PC-3 (cell line): ENCODE measurements at regions of chr5 and their contacts with region 1.

Region 1: GRCh38 chr5:17216176-17216973 is 1.1 kb upstream of the BASP1 start:
- DNase-seq: peak; percentile 99
- ATAC-seq: peak; percentile 51
- H3K4me3 ChIP-seq: peak overlapping the region; percentile 67
- H3K27ac ChIP-seq: no peak overlapping the region
- H3K4me1 ChIP-seq: peaks cover 29% of the 10 kb centered on the region
- H3K27me3 ChIP-seq: no peaks in the 10 kb centered on the region
- CTCF ChIP-seq: peak; percentile 99

Region 2: DNA sequence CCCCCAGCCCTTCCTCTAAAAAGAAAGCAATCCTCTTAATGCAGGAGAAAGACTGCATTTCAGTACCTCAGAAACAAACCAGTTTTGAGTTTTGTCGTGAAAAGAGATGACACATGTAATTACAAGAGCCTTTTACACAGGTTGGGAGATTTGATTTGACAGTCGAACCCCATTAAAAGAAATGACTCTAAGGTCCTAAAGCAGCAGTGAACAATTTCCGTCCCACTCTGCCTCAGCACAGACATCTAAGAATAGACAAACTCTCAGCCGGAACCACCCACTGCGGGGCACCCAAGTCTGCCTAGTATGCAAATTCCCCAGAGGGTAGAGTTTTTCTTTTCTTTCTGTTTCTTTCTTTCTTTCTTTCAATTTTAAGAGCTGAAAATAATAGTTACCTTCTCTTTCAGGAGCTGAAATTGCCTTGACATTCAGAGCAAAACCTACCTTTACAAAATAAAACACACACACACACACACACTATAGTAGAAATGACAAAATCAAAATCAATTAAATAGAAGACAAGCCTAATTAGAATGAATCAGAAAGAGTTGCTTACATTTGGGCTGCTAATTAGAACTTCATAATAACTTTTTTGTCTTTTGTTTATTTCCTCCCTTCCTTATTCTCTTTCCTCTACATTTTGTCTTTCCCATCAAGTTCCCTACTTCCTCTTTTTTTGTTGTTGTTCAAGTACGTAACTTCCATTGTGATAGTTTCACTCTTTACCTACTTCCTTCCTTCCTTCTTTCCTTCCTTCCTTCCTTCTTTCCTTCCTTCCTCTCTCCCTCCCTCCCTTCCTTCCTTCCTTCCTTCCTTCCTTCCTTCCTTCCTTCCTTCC is 66.1 kb after region 1 on chr5:
- CTCF ChIA-PET with region 1: no interaction called
- POLR2A ChIA-PET with region 1: no interaction called
- intact Hi-C with region 1: no loop called
- DNase-seq: no peak
- ATAC-seq: no peak
- H3K4me3 ChIP-seq: no peak overlapping the region
- H3K27ac ChIP-seq: no peak overlapping the region
- H3K4me1 ChIP-seq: no peaks in the 10 kb centered on the region
- H3K27me3 ChIP-seq: no peaks in the 10 kb centered on the region
- CTCF ChIP-seq: no peak

Region 3: DNA sequence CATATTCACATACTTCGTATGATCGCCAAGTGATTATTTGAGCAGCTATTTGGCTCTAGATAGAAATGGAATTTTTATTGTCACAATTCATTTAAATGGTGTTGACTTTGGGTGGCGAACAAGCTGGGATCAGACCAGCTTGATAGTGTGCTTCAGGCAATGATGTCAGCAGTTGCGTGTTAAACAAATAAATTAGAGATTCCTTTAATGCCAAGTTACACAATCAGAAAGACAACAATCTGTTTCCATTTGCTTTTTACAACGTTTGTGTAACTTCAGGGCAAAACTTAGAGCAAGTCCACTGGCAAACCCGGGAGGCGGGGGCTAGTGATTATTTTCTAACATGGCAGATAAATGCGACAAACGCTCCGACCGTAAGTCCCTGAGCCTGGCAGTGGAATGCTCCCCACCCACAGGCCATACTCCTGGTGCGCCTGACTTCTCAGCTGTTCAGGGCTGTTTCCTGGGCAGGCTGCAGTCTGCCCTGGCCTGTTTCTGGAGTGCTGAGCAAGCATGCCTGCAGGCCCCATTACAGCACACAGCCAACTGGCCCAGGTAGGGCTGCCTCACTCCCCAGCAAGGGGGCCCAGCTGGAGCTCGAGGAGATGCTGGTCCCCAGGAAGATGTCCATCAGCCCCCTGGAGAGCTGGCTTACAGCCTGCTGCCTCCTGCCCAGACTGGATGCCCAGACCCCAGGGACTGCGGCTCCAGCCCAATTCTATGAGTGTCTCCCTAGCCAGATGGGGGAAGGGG is 89.8 kb after region 1 on chr5:
- CTCF ChIA-PET with region 1: no interaction called
- POLR2A ChIA-PET with region 1: no interaction called
- intact Hi-C with region 1: loop called (anchors 2 kb)
- DNase-seq: peak; percentile 93
- ATAC-seq: peak; percentile 88
- H3K4me3 ChIP-seq: peak overlapping the region; percentile 43
- H3K27ac ChIP-seq: peak overlapping the region; percentile 89
- H3K4me1 ChIP-seq: peaks cover 35% of the 10 kb centered on the region
- H3K27me3 ChIP-seq: no peaks in the 10 kb centered on the region
- CTCF ChIP-seq: no peak

Region 4: GRCh38 chr5:17896605-17897004 is 680.2 kb after region 1 on chr5:
- CTCF ChIA-PET with region 1: no interaction called
- POLR2A ChIA-PET with region 1: no interaction called
- intact Hi-C with region 1: loop called (anchors 5 kb)
- DNase-seq: no peak
- ATAC-seq: no peak
- H3K4me3 ChIP-seq: no peak overlapping the region
- H3K27ac ChIP-seq: no peak overlapping the region
- H3K4me1 ChIP-seq: peaks cover 4% of the 10 kb centered on the region; the same call in 1 of the 2 replicates
- H3K27me3 ChIP-seq: no peaks in the 10 kb centered on the region
- CTCF ChIP-seq: no peak

Region 5: DNA sequence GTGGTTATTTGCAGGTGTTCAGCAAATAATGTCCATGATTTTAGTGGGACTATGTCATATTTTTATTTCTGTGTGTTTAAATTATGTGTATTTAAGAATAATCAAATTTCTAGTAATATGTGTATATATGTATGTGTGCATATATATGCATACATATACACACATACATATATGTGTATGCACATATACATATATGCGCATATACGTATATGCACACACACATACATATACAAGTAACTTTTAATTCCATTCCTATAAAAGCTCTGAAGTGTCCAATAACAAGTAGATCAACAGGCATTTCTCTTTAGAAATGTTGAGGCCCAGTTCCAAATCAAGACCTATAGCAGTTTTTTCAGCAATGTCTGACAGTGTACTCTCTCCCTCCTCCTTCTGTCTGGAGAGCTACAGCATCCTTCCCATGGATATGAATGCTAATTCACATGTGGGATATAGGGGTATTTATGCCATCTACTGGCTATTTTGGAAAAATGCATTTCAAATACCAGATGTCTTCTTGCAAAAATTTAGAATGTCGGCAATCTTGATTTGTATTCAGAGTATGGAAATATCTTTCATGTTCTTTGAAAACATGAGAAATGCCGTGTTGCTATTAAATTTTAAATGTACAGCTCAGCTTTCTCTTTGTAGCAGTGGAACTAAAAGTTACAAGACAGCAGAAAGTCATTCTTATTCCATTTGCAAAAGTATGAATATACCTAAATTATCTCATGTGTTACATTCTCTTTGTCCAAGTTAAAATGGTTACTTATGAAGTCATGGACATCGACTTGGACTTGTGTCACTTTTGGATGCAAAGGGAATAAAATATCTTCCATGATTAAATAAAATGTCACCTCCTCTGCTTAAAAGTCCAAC is 1065.5 kb after region 1 on chr5:
- CTCF ChIA-PET with region 1: interaction called, 21 read pairs
- POLR2A ChIA-PET with region 1: no interaction called
- intact Hi-C with region 1: loop called (anchors 1 kb)
- DNase-seq: peak; percentile 65
- ATAC-seq: peak; percentile 81
- H3K4me3 ChIP-seq: no peak overlapping the region
- H3K27ac ChIP-seq: no peak overlapping the region
- H3K4me1 ChIP-seq: no peaks in the 10 kb centered on the region
- H3K27me3 ChIP-seq: peaks cover 5% of the 10 kb centered on the region; the same call in 1 of the 2 replicates
- CTCF ChIP-seq: peak; percentile 86

Region 6: DNA sequence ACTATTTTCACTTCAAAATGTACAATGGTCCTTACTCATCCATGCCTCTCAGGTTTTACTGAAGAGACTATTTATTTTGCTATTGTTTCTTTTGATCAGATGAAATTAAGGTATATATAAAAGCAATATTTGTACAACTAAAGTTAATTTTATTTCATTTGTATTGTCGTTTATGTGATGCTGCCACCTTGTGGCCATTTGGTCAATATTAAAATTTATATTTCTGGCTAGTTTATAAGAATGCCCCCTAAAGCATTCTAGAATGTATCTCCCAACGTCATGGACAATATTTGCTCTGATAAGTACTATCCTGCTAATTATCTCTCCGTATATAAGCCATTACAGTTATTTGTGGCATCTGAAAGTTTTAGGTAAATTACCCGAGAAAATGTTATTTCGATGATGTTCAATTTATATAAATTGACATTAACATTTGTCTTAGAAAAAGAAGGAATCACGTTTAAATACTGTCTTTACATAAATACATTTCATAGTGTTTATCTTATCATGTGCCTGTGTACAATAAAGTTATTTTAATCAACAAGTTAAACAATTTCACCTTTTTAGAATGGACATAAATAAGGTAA is 1097.9 kb after region 1 on chr5:
- CTCF ChIA-PET with region 1: interaction called, 11 read pairs
- POLR2A ChIA-PET with region 1: no interaction called
- intact Hi-C with region 1: loop called (anchors 2 kb)
- DNase-seq: peak; percentile 66
- ATAC-seq: no peak
- H3K4me3 ChIP-seq: no peak overlapping the region
- H3K27ac ChIP-seq: no peak overlapping the region
- H3K4me1 ChIP-seq: no peaks in the 10 kb centered on the region
- H3K27me3 ChIP-seq: peaks cover 3% of the 10 kb centered on the region; the same call in 1 of the 2 replicates
- CTCF ChIP-seq: peak; percentile 85